ENCODE measurements at regions of chr1 and their contacts with region 1.

Region 1: DNA sequence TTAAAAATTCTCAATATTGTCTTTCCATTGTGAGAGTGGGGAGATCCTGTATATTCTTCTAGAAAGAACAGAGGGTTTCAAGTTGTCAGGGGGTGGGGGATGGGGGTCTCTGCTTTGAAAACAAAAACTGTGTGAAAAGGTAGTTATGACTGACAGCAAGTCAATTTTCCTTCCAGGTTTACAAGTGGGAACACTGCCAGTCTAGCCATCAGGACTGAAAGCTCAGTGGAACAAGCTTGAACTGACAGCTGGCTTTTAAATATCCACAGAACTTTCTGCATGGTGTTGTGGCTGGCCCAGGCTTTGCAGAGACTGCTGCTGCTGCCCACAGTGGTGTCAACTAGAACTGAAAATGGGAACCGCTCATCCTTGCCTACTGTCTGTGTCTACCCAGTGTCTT is 162.6 kb downstream of the TNR start:
- DNase-seq: no peak
- ATAC-seq: no peak
- H3K4me3 Mint-ChIP-seq: no peak overlapping the region
- H3K27ac Mint-ChIP-seq: no peak overlapping the region
- H3K4me1 Mint-ChIP-seq: no peaks in the 10 kb centered on the region
- H3K27me3 Mint-ChIP-seq: no peaks in the 10 kb centered on the region

Region 2: GRCh38 chr1:175563236-175563895 is 17.5 kb before region 1 on chr1:
- CTCF ChIA-PET with region 1: no interaction called
- POLR2A ChIA-PET with region 1: no interaction called
- intact Hi-C with region 1: loop called in 1 of 2 experiments (anchors 2 kb)
- DNase-seq: no peak
- ATAC-seq: no peak
- H3K4me3 Mint-ChIP-seq: no peak overlapping the region
- H3K27ac Mint-ChIP-seq: no peak overlapping the region
- H3K4me1 Mint-ChIP-seq: no peaks in the 10 kb centered on the region
- H3K27me3 Mint-ChIP-seq: peaks cover 10% of the 10 kb centered on the region

Region 3: DNA sequence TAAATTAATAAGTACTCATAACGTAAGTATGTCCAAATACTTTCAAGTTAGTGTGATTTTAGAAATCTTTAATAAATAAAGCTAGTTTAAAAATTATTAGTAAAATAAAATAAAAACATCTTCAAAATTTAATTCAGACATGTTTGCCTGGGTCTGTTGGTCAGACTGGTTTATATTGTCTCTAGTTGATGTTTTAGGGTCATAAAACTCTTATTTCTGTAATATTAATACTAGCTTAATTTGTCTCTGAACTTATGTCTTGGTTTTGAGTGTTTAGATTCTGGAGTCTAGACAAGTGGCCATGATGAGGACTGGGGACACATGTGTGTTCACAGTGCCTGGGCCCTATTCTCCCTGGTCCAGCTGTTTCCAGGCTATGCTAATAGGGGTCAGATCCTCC is 347.1 kb after region 1 on chr1:
- CTCF ChIA-PET with region 1: no interaction called
- POLR2A ChIA-PET with region 1: no interaction called
- intact Hi-C with region 1: no loop called
- DNase-seq: no peak
- ATAC-seq: no peak
- H3K4me3 Mint-ChIP-seq: no peak overlapping the region
- H3K27ac Mint-ChIP-seq: no peak overlapping the region
- H3K4me1 Mint-ChIP-seq: no peaks in the 10 kb centered on the region
- H3K27me3 Mint-ChIP-seq: no peaks in the 10 kb centered on the region